ENCODE measurements at regions of chr11 and their contacts with region 1.

Region 1: DNA sequence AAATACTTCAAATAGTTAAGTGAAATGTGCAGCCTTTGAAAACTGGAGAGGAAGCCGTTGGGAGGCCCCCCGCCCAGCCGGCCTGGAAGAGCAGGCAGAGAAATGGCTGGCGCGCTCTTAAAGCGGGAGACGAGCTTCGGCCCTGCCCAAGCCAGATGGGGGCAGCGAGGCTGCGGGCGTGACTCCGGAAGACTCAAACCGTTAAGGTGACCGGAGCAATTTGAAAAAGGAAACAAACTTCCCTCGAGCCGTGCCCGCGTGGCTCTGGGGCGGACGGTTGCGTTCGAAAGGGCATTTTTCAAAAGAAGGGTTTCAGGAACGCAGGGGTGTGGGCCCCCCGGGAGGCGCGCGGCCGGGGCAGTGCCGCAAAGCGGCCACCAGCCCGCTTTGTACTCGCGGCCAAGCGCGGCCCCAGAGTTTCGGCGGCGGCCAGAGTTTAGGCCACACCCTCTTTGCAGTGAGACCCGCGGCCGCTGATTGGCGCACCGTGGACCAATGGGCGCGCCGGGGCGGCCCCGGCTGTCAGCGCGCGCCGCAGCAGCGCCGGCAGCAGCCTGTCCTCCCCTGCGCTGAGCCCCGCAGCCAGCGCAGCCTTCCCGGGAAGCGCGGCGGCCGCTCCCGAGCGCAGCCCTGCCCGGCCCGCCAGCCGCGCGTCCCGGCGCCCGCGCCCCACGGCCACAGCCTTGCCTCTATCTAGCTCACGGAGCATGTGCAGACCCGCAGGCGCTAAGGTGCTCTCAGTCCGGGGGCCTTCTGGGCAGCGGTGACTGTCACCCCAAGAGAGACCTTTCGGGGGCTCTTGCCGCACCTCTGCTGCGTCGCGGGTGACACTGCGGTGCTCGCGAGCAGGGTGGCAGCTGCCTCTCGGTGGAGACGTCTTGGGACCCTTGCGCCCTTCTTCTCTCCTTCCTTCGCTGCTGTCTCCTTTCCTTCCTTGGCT is at the start of gene NAV2:
- DNase-seq: peak; percentile 72
- H3K4me3 Mint-ChIP-seq: peak within 1 kb of the TSS; percentile 81
- H3K27ac Mint-ChIP-seq: peak within 1 kb of the TSS; percentile 53
- H3K4me1 Mint-ChIP-seq: peaks cover 18% of the 10 kb centered on the region
- H3K27me3 Mint-ChIP-seq: peaks cover 44% of the 10 kb centered on the region
- total RNA-seq, gene NAV2: 0.20 to 0.41 TPM

Region 2: GRCh38 chr11:19116971-19117750 is 595.4 kb before region 1 on chr11 and contains the start of gene ZDHHC13:
- CTCF ChIA-PET with region 1: no interaction called
- intact Hi-C with region 1: loop called (anchors 2 kb)
- DNase-seq: peak; percentile 98
- H3K4me3 Mint-ChIP-seq: peak within 1 kb of the TSS; percentile 89
- H3K27ac Mint-ChIP-seq: peak within 1 kb of the TSS; percentile 79
- H3K4me1 Mint-ChIP-seq: peaks cover 49% of the 10 kb centered on the region
- H3K27me3 Mint-ChIP-seq: no peaks in the 10 kb centered on the region
- total RNA-seq, gene ZDHHC13: 20.9 to 25.1 TPM

Region 3: DNA sequence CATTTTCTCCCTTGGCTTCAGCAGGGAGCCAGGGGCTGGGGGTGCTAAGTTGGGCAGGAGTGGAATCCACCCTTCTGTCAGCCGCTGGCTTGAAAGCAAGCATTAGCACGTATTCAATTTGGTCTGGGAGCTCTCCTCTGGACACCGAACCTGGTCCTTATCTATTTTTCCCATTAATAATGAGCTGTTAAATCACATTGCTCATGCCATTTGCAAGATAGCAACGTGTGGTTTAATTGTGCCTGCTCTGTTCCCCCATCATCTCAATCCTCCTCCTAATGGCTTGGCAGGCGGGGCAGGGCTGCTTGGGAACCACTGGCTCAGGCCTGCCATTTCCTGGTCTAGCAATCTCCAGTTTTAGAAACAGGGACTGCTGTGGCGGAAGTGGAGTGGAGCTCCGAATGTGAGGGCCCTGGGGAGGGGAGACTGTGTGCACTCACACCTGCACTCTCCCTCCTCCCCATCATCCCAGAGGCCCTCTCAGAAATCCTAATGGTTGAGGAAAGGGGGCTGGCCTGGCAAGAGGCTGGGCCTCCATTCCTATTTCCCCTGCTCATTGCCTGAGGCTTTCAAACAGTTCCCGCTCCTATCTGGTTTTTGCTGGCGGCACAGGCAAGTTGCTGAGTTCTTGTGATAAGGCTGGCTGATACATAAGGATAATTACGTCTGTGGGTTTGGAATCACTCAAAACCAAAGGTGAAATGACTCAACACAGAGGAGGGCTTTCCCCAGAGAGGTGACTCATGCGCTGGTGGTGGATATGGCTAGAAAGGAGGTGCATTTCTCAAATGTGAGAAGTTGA is 270.6 kb before region 1 on chr11:
- CTCF ChIA-PET with region 1: no interaction called
- intact Hi-C with region 1: loop called (anchors 5 kb)
- DNase-seq: peak; percentile 84
- H3K4me3 Mint-ChIP-seq: no peak overlapping the region
- H3K27ac Mint-ChIP-seq: no peak overlapping the region
- H3K4me1 Mint-ChIP-seq: peaks cover 11% of the 10 kb centered on the region
- H3K27me3 Mint-ChIP-seq: peaks cover 18% of the 10 kb centered on the region

Region 4: GRCh38 chr11:19723572-19724342 is 11.2 kb after region 1 on chr11:
- CTCF ChIA-PET with region 1: no interaction called
- intact Hi-C with region 1: loop called (anchors 1 kb)
- DNase-seq: peak; percentile 69
- H3K4me3 Mint-ChIP-seq: no peak overlapping the region
- H3K27ac Mint-ChIP-seq: peak overlapping the region; percentile 84
- H3K4me1 Mint-ChIP-seq: peaks cover 23% of the 10 kb centered on the region
- H3K27me3 Mint-ChIP-seq: no peaks in the 10 kb centered on the region

Region 5: DNA sequence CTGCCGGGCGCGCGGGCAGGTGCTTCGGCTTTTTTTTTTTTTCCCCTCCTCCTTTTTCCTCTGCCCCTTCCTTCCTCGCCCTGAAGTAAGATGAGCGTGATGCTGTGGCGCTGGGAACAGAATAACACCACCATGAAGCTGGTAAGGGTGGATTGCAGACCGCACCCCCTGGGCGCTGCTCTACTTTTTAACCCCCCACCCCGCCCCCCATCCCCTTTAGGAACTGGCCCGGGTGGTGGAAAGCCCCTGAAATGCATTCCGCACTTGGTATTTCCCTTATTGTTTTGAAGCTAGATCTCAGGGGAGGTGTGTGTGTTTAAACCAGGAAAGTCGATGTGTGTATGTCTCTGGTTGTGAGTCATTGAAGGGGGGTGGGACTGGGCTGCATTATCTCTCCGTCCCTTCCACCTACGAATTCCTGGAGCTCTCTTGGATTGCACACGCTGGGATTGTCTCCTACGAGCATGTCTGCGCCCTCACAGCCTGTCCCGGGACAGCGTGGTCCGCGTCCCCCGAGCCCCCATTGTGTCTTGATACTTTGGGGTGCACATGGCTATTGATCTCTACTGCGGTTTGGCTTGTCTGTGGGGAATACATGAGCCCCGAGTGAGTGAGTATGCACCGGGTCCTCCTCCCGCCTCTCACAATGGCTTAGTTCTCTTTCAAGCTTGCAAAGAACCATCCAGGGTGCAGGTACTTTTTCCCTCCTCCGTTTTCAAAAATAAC is 65.0 kb after region 1 on chr11:
- CTCF ChIA-PET with region 1: no interaction called
- intact Hi-C with region 1: loop called (anchors 1 kb)
- DNase-seq: peak; percentile 37
- H3K4me3 Mint-ChIP-seq: peak overlapping the region; percentile 36
- H3K27ac Mint-ChIP-seq: no peak overlapping the region
- H3K4me1 Mint-ChIP-seq: peaks cover 9% of the 10 kb centered on the region
- H3K27me3 Mint-ChIP-seq: peaks cover 45% of the 10 kb centered on the region

Region 6: DNA sequence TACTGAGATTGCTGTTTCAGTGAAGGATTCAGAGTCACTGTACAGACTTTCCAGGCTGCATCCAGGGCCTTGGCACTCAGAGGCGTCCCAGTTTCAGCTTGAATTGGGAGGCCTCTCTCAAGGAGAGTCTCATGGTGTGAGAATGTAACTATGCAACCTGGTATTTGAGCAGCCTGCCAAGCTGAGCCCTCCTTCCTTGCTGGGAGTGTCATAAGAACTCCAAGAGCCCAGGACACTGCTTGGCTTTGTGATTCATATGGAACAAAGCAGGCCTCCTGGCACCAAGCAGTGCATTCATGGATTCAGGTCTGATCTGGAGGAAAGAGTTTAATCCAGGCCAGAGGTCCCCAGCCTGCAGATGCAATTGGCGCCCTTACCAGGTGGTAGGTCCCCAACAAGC is 276.0 kb after region 1 on chr11:
- CTCF ChIA-PET with region 1: no interaction called
- intact Hi-C with region 1: no loop called
- DNase-seq: no peak
- H3K4me3 Mint-ChIP-seq: no peak overlapping the region
- H3K27ac Mint-ChIP-seq: no peak overlapping the region
- H3K4me1 Mint-ChIP-seq: no peaks in the 10 kb centered on the region
- H3K27me3 Mint-ChIP-seq: peaks cover 7% of the 10 kb centered on the region

Region 7: GRCh38 chr11:20363500-20364411 is 651.2 kb after region 1 on chr11 and contains the start of gene HTATIP2:
- CTCF ChIA-PET with region 1: no interaction called
- intact Hi-C with region 1: loop called (anchors 5 kb)
- DNase-seq: peak; percentile 75
- H3K4me3 Mint-ChIP-seq: peak within 1 kb of the TSS; percentile 82
- H3K27ac Mint-ChIP-seq: peak within 1 kb of the TSS; percentile 91
- H3K4me1 Mint-ChIP-seq: peaks cover 68% of the 10 kb centered on the region
- H3K27me3 Mint-ChIP-seq: no peaks in the 10 kb centered on the region
- total RNA-seq, gene HTATIP2: 78.3 to 80.7 TPM